Ascending aorta (tissue), 2 donors: ENCODE measurements at regions of chr19 and their contacts with region 1.

Region 1: GRCh38 chr19:53195265-53195903 is 2.2 kb upstream of the ZNF665 start:
- DNase-seq: peak; percentile 21 to 89
- H3K4me3 ChIP-seq: no peak overlapping the region
- H3K27ac ChIP-seq: no peak overlapping the region
- H3K4me1 ChIP-seq: peaks cover 0 to 4% of the 10 kb centered on the region in 2 donors
- H3K27me3 ChIP-seq: no peaks in the 10 kb centered on the region
- CTCF ChIP-seq: peak; percentile 71 to 91 (median 90)

Region 2: DNA sequence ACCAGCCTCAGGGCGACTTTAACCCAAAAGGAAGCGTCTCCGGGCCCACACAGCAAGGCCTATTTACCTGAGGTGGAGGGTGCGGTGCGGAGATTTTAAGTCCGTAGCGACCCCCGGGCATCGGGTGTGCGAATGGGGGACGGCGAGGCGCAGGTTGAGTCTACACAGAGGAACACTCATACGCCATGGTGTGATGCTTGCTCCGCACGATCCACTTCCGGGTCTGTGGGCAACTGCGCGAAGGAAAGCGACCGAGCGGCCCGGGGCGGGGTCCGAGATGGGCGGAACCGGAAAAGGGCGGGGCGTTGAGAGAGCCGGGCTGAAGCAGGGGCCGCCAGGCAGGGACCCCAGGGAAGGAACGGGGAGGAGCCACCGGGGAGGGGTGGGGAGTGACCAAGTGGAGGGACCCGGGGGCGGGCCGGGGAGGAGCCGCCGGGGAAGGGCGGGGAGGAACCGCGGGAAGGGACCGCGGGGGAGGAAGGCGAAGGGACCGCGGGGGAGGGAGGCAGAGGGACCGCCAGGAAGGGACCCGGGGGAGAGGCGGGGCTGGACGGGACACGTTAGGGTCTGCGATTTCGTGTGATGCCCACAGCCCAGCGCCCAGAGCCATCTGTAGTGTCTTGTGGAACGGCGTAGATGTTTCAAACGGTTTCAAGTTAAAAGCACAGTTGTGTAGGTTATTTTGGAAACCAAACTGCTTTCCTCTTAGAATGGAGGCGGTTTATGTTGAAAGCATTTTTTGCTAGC is 92.0 kb before region 1 on chr19 and contains the start of gene ZNF160:
- intact Hi-C with region 1: loop called (anchors 1 kb)
- DNase-seq: peak; percentile 92 to 99
- H3K4me3 ChIP-seq: peak within 1 kb of the TSS; percentile 69 to 76
- H3K27ac ChIP-seq: peak within 1 kb of the TSS; percentile 87 to 89
- H3K4me1 ChIP-seq: peaks cover 3 to 13% of the 10 kb centered on the region in 2 donors
- H3K27me3 ChIP-seq: no peaks in the 10 kb centered on the region
- CTCF ChIP-seq: no peak
- total RNA-seq, gene ZNF160: 124 TPM

Region 3: DNA sequence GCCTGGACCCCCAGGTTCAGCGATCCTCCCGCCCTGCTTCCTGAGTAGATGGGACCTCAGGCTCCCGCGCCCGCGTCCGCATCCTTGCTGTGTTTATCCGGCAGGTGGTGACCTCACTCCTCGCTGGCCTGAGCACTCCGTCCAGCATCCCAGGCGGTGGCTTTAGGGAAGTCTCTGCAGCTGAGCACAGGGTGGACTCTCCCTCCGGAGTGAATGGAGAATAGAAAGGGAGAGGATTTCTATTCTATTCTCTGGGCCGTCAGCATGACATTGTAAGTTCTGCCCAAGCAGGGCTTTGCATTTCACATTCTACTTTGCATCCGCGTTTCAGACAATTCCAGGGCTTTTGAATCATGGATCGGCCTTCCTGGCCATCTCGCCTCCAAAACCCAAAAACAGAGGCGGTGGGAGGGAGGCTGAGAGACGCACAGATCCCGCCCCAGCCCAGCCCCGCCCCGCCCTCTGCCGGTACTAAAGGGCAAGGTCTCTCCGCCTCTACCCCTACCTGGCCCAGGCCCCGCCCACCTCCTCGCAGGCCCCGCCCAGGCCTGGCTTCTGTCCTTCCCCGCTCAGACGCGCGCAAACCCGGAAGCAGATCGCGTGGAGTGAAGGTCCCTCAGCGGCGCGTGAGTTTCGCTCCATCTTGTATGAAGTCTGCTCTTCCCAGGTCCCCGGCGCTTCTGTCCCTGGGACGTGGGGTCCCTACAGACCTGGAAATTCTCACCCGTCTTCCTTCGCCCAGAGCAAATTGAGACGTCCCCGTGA is 169.9 kb after region 1 on chr19 and contains the start of gene ZNF525:
- intact Hi-C with region 1: loop called (anchors 1 kb)
- DNase-seq: peak; percentile 81 to 94
- H3K4me3 ChIP-seq: peak within 1 kb of the TSS; percentile 63 to 67
- H3K27ac ChIP-seq: peak within 1 kb of the TSS; percentile 73 to 81
- H3K4me1 ChIP-seq: peaks cover 0 to 6% of the 10 kb centered on the region in 2 donors
- H3K27me3 ChIP-seq: no peaks in the 10 kb centered on the region
- CTCF ChIP-seq: peak in 1 of 3 experiments; percentile 26
- total RNA-seq, gene ZNF525: 3.0 TPM

Region 4: DNA sequence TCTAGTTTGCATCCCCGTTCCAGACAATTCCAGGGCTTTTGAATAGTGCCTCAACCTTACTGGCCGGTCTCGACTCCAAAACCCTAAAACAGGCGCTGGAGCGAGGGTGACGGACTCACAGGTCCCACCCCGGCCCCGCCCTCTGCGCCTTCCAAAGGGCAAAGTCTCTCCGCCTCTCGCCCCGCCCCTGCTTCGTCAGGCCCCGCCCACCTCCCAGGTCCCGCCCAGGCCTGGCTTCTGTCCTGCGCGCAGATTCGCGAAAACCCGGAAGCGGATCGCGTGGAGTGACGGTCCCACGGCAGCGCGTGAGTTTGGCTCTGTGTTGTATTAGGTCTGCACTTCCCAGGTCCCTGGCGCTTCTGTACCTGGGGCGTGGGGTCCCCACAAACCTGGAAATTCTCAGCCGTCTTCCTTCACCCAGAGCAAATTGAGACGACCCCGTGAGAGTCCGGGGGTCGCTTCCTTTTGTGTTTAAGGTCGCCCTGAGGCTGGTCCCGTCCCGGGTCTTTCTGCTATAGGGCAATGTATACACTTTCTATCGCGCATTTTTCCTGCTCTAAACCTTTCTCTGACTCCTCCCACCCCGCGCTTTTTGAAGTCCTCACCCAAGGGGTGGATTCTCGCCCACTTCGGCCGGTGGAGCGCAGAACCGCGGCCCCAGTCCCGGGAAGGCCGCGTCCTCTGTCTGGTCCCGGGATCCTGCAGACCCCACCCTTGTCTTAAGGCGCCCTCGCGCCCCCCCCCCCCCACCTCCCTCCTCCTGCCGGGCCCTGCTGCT is 272.3 kb after region 1 on chr19 and contains the start of gene ZNF813:
- intact Hi-C with region 1: loop called (anchors 5 kb)
- DNase-seq: peak; percentile 76 to 97
- H3K4me3 ChIP-seq: peak within 1 kb of the TSS; percentile 78 to 84
- H3K27ac ChIP-seq: peak within 1 kb of the TSS; percentile 50 to 56
- H3K4me1 ChIP-seq: peaks cover 0 to 11% of the 10 kb centered on the region in 2 donors
- H3K27me3 ChIP-seq: no peaks in the 10 kb centered on the region
- CTCF ChIP-seq: no peak
- total RNA-seq, gene ZNF813: 1.3 TPM

Region 5: GRCh38 chr19:53782698-53783097 is 587.3 kb after region 1 on chr19:
- intact Hi-C with region 1: no loop called
- DNase-seq: no peak
- H3K4me3 ChIP-seq: no peak overlapping the region
- H3K27ac ChIP-seq: no peak overlapping the region
- H3K4me1 ChIP-seq: no peaks in the 10 kb centered on the region
- H3K27me3 ChIP-seq: no peaks in the 10 kb centered on the region
- CTCF ChIP-seq: no peak

Region 6: GRCh38 chr19:53867225-53868090 is 672.1 kb after region 1 on chr19 and contains the start of gene MYADM:
- intact Hi-C with region 1: loop called (anchors 5 kb)
- DNase-seq: peak; percentile 99 to 100
- H3K4me3 ChIP-seq: peak within 1 kb of the TSS; percentile 86
- H3K27ac ChIP-seq: peak within 1 kb of the TSS; percentile 98 to 99
- H3K4me1 ChIP-seq: peaks cover 3 to 28% of the 10 kb centered on the region in 2 donors
- H3K27me3 ChIP-seq: no peaks in the 10 kb centered on the region
- CTCF ChIP-seq: no peak
- total RNA-seq, gene MYADM: 422 TPM